H1 (cell line): ENCODE measurements at regions of chr7 and their contacts with region 1.

Region 1: DNA sequence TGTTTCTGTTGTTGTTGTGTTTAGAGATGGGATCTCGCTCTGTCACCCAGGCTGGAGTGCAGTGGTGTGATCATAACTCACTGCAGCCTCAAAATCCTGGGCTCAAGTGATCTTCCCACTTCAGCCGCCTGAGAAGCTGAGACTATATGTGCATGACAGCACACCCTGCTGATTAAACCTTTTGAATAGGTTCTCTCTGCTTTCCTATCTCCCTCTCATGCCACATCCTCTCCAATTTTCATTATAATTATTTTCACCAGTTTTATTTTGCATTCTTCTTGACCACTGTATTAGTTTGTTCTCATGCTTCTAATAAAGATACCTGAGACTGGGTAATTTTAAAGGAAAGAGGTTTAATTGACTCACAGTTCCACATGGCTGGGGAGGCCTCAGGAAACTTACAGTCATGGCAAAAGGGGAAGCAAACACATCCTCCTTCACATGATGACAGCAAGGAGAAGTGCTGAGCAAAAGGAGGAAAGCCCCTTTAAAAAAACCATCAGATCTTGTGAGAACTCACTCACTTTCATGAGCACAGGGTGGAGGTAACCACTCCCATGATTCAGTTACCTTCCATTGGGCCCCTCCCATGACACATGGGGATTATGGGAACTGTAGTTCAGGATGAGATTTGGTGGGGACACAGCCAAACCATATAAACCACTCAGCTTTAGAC is 12.9 kb downstream of the AGK start:
- DNase-seq: no peak
- H3K4me3 ChIP-seq: no peak overlapping the region
- H3K27ac ChIP-seq: no peak overlapping the region
- H3K4me1 ChIP-seq: peaks cover 0 to 2% (median 0%) of the 10 kb centered on the region in 4 experiments; a peak in 2 of 7 replicates
- H3K27me3 ChIP-seq: no peaks in the 10 kb centered on the region
- CTCF ChIP-seq: no peak
- EP300 ChIP-seq: no peak
- POLR2A ChIP-seq: no peak
- RAD21 ChIP-seq: no peak

Region 2: DNA sequence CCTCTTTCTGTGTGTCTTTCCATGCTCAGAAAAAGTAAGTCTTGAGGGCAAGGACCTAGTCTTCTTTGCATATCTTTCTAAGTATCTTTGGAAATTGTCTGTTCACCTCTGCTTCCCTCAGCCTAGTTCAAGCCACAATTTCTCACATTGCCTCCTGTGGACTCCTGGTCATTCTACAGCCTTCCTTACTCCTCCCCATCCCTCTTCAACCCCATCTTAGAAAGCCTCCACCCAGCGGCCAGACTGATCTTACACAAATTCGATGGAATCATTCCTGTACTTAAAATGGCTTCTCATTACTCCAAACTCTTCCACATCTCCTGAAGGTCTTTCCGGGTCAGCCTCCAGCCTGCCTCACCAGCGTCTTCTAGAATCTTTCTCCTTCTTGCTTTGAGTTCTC is 37.0 kb before region 1 on chr7:
- CTCF ChIA-PET with region 1: no interaction called
- POLR2A ChIA-PET with region 1: no interaction called
- DNase-seq: no peak
- H3K4me3 ChIP-seq: no peak overlapping the region
- H3K27ac ChIP-seq: no peak overlapping the region
- H3K4me1 ChIP-seq: peaks cover 0 to 3% (median 0%) of the 10 kb centered on the region in 4 experiments; a peak in 2 of 7 replicates
- H3K27me3 ChIP-seq: no peaks in the 10 kb centered on the region
- CTCF ChIP-seq: no peak
- EP300 ChIP-seq: no peak
- POLR2A ChIP-seq: no peak
- RAD21 ChIP-seq: no peak

Region 3: DNA sequence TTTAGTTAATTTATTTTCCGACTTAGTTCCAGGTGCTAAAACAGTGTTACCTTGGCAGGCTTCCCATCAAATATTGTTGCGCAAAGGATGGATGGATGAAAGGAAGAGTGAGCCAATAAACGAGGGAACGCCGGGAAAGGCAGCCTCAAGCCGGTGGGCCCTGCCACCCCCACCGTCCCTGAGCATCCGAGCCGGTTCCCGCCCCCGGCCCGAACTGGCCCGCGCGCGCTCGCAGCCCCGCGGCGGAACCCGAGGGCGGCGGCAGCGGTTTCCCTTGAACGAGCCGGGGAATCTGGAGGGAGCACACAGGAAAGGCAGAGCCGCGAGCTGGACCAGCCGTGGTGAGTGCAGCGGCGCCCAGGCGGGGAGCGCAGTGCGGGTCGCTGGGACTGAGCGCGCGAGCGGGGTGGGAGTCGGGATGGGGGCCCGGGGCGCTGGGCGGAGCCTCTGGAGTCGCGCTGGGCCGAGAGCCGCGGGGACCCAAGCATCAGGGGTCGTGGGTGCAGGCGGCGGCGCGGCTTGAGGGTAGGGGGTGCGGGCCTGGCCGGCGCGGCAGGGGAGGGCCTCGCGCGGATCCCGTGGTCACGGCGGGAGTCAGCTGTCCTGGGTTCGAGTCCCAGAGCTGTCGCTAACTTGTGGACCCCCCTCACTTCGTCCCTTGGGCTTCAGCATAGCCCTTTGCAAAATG is 12.9 kb before region 1 on chr7 and contains the start of gene AGK:
- CTCF ChIA-PET with region 1: interaction called, 6 read pairs
- POLR2A ChIA-PET with region 1: interaction called, 20 read pairs
- DNase-seq: peak; percentile 43 to 88
- H3K4me3 ChIP-seq: peak within 1 kb of the TSS; percentile 63 to 86 (median 72)
- H3K27ac ChIP-seq: peak within 1 kb of the TSS; percentile 3; the same call in 1 of the 2 replicates
- H3K4me1 ChIP-seq: peaks cover 3 to 5% (median 5%) of the 10 kb centered on the region in 4 experiments; a peak in 6 of 7 replicates
- H3K27me3 ChIP-seq: no peaks in the 10 kb centered on the region
- CTCF ChIP-seq: no peak
- EP300 ChIP-seq: peak in 1 of 2 experiments; percentile 78; a peak in 1 of 3 replicates
- POLR2A ChIP-seq: peak; percentile 53 to 89
- RAD21 ChIP-seq: no peak; a peak in 1 of 4 replicates
- total RNA-seq, gene AGK: 30.0 and 34.0 TPM in 2 replicates